Thyroid gland (tissue), 4 donors: ENCODE measurements at regions of chr9 and their contacts with region 1.

Region 1: DNA sequence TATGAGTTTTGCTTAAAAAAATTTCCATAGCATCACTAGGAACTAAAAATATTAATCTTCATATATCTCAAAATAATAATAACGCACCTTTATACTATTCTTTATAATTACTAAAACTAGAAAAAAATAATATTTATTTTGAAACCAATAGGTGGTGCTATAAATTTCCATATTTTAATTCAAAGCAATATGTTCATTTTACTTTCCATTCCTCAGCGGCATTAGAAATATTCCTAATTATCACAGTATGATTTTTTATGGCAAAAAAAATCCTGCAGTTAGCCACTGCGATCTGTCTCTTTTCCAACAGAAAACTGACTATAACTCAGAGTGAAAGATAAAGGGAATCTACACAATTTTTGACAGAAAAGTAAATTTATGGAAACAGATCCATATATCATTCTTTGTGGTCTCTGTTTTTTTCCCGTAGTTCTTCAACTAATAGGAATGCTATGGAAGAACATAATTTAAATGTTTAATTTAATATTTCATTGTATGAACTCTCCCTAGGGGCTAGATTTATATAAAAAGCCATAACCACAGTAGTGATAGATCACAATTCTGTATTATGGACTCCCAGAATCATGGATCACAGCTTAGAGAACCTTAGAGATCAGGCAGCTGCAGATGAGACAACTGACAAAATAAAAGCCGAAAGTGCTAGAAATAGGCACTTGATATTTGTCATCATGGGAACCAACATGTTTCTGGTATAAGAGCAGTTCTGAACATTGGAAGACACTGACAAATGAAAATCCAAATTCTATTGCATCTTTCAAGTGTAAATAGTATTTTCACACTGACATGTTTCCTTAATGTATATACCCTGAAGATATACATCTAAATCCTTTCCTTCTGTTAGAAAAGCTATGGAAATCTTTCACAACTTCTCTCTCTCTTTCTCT is 167.7 kb upstream of the MPDZ start:
- DNase-seq: no peak
- H3K4me3 ChIP-seq: no peak overlapping the region
- H3K27ac ChIP-seq: no peak overlapping the region
- H3K4me1 ChIP-seq: no peaks in the 10 kb centered on the region
- H3K27me3 ChIP-seq: no peaks in the 10 kb centered on the region
- CTCF ChIP-seq: peak in 2 of 6 experiments; percentile 29 to 32
- POLR2A ChIP-seq: no peak

Region 2: DNA sequence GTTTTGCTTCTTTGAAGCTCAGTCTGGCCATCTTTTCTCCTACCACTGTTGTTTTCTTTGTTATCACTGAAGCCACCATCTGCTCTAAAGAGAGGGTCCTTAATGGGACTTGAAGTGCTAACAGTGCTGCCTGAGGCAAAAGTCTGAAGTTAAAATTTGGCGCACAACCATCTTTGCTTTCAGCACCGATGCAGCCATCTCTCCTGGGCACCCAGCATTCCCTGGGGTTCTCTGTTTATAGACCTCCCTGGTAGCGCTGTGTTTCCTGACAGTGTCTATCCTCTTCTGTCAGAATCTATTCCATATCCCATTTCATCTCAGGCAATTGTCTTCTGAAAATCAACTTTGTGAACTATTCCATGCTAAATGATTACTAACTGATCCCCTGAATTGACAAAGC is 323.8 kb after region 1 on chr9:
- intact Hi-C with region 1: no loop called
- DNase-seq: no peak
- H3K4me3 ChIP-seq: no peak overlapping the region
- H3K27ac ChIP-seq: no peak overlapping the region
- H3K4me1 ChIP-seq: no peaks in the 10 kb centered on the region
- H3K27me3 ChIP-seq: no peaks in the 10 kb centered on the region
- CTCF ChIP-seq: no peak
- POLR2A ChIP-seq: no peak

Region 3: DNA sequence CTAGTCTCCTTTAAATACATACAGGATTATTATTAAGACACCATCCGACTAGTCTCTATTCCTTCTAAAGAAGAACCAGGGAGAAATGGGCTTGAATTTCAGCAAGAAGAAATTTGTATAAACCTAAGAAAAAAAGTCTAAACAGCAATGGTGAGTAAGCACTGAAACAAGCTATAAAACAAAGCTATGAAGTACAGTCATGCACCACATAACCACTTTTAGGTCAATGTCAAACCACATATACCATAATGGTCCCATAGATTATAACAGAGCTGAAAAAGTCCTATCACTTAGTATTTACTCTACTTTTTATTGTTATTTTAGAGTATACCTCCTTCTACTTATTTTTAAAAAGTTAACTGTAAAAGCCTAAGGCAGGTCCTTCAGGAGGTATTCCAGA is 968.8 kb after region 1 on chr9:
- intact Hi-C with region 1: loop called (anchors 10 kb)
- DNase-seq: no peak
- H3K4me3 ChIP-seq: no peak overlapping the region
- H3K27ac ChIP-seq: no peak overlapping the region
- H3K4me1 ChIP-seq: peaks cover 9 to 12% of the 10 kb centered on the region in 2 donors
- H3K27me3 ChIP-seq: no peaks in the 10 kb centered on the region
- CTCF ChIP-seq: no peak
- POLR2A ChIP-seq: no peak